CD4-positive, alpha-beta T cell (primary cell): ENCODE measurements at regions of chr4 and their contacts with region 1.

Region 1: GRCh38 chr4:126643980-126644379 is 988.8 kb upstream of the INTU start:
- DNase-seq: no peak
- ATAC-seq: no peak
- H3K4me3 ChIP-seq: no peak overlapping the region
- H3K4me3 Mint-ChIP-seq: no peak overlapping the region
- H3K27ac ChIP-seq: no peak overlapping the region
- H3K27ac Mint-ChIP-seq: no peak overlapping the region
- H3K4me1 ChIP-seq: no peaks in the 10 kb centered on the region
- H3K4me1 Mint-ChIP-seq: no peaks in the 10 kb centered on the region
- H3K27me3 ChIP-seq: no peaks in the 10 kb centered on the region
- H3K27me3 Mint-ChIP-seq: no peaks in the 10 kb centered on the region
- CTCF ChIP-seq: no peak

Region 2: GRCh38 chr4:126223784-126224407 is 420.1 kb before region 1 on chr4:
- CTCF ChIA-PET with region 1: no interaction called
- POLR2A ChIA-PET with region 1: no interaction called
- intact Hi-C with region 1: loop called in 1 of 2 experiments (anchors 5 kb)
- DNase-seq: no peak
- ATAC-seq: no peak
- H3K4me3 ChIP-seq: no peak overlapping the region
- H3K4me3 Mint-ChIP-seq: no peak overlapping the region
- H3K27ac ChIP-seq: no peak overlapping the region
- H3K27ac Mint-ChIP-seq: no peak overlapping the region
- H3K4me1 ChIP-seq: no peaks in the 10 kb centered on the region
- H3K4me1 Mint-ChIP-seq: no peaks in the 10 kb centered on the region
- H3K27me3 ChIP-seq: no peaks in the 10 kb centered on the region
- H3K27me3 Mint-ChIP-seq: no peaks in the 10 kb centered on the region
- CTCF ChIP-seq: no peak

Region 3: DNA sequence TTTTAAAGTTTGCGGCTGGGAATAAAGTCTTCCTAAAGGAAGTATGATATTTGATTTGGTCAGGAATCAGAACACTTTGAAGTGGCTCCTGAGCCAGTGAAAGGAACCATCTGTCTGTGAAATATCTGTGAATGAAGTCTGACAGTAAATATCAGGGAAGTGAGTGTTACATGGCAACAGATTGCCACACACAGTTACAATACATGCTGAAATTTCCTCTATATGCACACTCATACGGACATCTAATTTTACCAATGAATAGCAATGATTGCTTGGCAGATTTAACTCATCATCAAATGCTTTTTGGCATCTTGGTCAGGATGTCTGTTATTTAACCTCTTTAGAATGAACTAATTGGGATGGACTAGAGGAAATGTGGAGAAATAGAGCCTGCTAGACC is 305.4 kb before region 1 on chr4:
- CTCF ChIA-PET with region 1: no interaction called
- POLR2A ChIA-PET with region 1: no interaction called
- intact Hi-C with region 1: no loop called
- DNase-seq: no peak
- ATAC-seq: no peak
- H3K4me3 ChIP-seq: no peak overlapping the region
- H3K4me3 Mint-ChIP-seq: no peak overlapping the region
- H3K27ac ChIP-seq: no peak overlapping the region
- H3K27ac Mint-ChIP-seq: no peak overlapping the region
- H3K4me1 ChIP-seq: no peaks in the 10 kb centered on the region
- H3K4me1 Mint-ChIP-seq: no peaks in the 10 kb centered on the region
- H3K27me3 ChIP-seq: no peaks in the 10 kb centered on the region
- H3K27me3 Mint-ChIP-seq: no peaks in the 10 kb centered on the region
- CTCF ChIP-seq: no peak

Region 4: DNA sequence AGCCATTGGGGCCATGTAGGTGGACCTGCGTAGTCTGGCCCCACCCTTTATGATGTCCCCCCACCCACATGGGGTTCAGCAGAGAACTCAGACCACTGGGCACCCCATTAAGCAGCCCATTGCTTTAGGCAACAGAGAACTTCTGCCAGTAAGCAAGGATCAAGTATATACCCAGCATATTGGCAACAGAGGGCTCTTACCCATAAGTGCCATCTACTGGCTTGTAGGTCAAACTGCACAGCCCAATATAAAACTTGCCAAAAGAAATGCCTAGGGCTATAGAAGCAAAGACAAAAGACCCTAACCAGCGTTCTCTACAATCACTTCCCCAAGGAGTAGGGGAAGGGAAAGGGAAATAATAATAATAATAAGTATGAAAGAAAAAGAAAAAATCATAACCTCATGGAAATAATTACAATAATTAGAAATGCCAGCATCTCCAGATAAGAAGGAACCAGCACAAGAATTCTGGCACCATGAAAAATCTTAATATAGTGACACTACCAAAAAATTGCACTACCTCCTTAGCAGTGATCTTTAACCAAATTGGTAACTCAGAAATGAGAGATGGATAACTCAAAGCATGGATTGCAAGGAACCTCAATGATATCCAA is 238.5 kb before region 1 on chr4:
- CTCF ChIA-PET with region 1: no interaction called
- POLR2A ChIA-PET with region 1: no interaction called
- intact Hi-C with region 1: no loop called
- DNase-seq: no peak
- ATAC-seq: no peak
- H3K4me3 ChIP-seq: no peak overlapping the region
- H3K4me3 Mint-ChIP-seq: no peak overlapping the region
- H3K27ac ChIP-seq: no peak overlapping the region
- H3K27ac Mint-ChIP-seq: no peak overlapping the region
- H3K4me1 ChIP-seq: no peaks in the 10 kb centered on the region
- H3K4me1 Mint-ChIP-seq: no peaks in the 10 kb centered on the region
- H3K27me3 ChIP-seq: no peaks in the 10 kb centered on the region
- H3K27me3 Mint-ChIP-seq: no peaks in the 10 kb centered on the region
- CTCF ChIP-seq: no peak

Region 5: DNA sequence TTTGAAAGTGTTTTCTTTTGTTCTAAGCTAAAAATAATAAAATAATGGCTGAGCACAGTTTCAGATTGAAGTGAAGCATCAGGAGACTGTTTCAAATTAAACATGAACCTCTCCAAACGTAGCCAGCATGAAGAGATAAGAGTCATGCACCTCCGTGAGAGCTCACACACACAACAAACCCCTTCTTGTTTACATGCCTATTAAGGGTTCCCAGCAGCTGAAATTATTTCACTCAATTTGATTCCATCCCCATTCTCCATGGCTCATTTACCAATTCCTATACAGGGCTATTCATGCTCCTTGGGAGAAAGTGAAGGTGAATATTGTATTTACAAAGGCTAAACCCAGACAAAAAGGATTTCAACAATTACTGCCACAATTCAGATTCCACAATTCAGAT is 34.6 kb after region 1 on chr4:
- CTCF ChIA-PET with region 1: no interaction called
- POLR2A ChIA-PET with region 1: no interaction called
- intact Hi-C with region 1: no loop called
- DNase-seq: no peak
- ATAC-seq: no peak
- H3K4me3 ChIP-seq: no peak overlapping the region
- H3K4me3 Mint-ChIP-seq: no peak overlapping the region
- H3K27ac ChIP-seq: no peak overlapping the region
- H3K27ac Mint-ChIP-seq: no peak overlapping the region
- H3K4me1 ChIP-seq: no peaks in the 10 kb centered on the region
- H3K4me1 Mint-ChIP-seq: no peaks in the 10 kb centered on the region
- H3K27me3 ChIP-seq: no peaks in the 10 kb centered on the region
- H3K27me3 Mint-ChIP-seq: no peaks in the 10 kb centered on the region
- CTCF ChIP-seq: no peak